K562 (cell line): ENCODE measurements at regions of chr2 and their contacts with region 1.

Region 1: DNA sequence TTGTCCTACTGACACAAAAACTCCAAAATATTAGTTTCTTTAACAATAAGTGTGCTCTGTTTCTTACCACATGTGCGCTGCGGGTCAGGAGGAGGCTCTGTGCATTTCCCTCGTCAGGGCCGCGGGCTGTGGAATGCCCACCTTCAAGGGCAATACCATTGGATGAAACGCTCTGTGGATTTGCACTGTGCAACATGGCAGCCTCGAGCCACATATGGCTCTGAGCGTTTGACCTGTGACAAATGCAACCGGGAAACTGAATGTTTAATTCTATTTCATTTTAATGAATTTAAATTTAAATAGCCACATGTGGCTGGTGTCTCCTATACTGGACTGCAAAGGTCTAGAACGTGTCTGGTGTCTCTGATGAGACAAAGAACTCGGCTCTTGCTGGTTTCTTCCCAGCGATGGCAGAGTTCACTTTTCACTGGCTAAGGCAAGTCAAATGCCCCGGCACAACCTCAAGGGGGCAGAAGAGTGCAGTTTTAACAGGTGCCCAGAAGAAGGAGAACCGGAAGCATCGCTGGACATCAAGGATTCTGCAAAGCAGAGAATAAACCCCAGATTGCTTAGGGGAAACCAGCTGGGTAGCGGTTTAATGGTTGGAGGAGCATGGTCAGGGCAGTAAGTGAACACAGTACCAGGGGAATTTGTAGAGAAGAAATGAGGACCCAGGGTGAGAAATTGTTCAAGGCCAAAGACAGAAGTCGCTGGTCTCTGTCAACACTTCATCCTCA is 37.0 kb upstream of the TMEM18 start:
- DNase-seq: peak in 3 of 4 experiments; percentile 33 to 50 (median 34)
- ATAC-seq: peak; percentile 81
- H3K4me3 ChIP-seq: no peak overlapping the region
- H3K27ac ChIP-seq: no peak overlapping the region
- H3K4me1 ChIP-seq: no peaks in the 10 kb centered on the region; a peak in 1 of 5 replicates
- H3K27me3 ChIP-seq: peaks cover 0 to 27% of the 10 kb centered on the region in 2 experiments; a peak in 4 of 5 replicates
- CTCF ChIP-seq: peak; percentile 49 to 63 (median 49); a peak in 5 of 6 replicates
- EP300 ChIP-seq: no peak
- POLR2A ChIP-seq: no peak
- RAD21 ChIP-seq: peak; percentile 28 to 50; a peak in 2 of 4 replicates

Region 2: DNA sequence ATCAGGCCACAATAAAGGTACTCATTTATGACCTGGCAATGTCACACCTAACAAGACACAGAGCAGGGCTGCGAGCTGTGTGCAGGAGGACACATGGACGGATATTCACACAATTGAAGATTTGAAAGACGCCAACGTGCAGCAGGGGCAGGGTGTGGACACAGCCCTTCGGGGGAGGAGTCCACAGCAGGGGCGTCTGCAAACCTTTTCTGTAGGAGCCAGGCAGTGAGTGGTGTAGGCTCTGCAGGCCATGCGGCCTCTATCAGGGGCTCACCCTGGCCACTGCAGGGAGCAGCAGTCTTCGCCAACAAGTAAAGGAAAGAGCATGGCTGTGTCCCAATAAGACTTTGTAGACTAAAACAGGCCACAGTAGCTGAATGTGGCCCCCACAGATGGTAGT is 110.8 kb after region 1 on chr2:
- CTCF ChIA-PET with region 1: interaction called, 3 read pairs
- POLR2A ChIA-PET with region 1: no interaction called
- in situ Hi-C with region 1: no loop called
- intact Hi-C with region 1: loop called (anchors 10 kb)
- DNase-seq: no peak
- ATAC-seq: peak; percentile 86
- H3K4me3 ChIP-seq: no peak overlapping the region
- H3K27ac ChIP-seq: no peak overlapping the region
- H3K4me1 ChIP-seq: 0 out of 5 replicates have a peak, but pooled peaks cover 0 to 3% of the 10 kb centered on the region in 2 experiments
- H3K27me3 ChIP-seq: peaks cover 18 to 46% of the 10 kb centered on the region in 2 experiments
- CTCF ChIP-seq: no peak
- EP300 ChIP-seq: no peak
- POLR2A ChIP-seq: no peak
- RAD21 ChIP-seq: no peak

Region 3: DNA sequence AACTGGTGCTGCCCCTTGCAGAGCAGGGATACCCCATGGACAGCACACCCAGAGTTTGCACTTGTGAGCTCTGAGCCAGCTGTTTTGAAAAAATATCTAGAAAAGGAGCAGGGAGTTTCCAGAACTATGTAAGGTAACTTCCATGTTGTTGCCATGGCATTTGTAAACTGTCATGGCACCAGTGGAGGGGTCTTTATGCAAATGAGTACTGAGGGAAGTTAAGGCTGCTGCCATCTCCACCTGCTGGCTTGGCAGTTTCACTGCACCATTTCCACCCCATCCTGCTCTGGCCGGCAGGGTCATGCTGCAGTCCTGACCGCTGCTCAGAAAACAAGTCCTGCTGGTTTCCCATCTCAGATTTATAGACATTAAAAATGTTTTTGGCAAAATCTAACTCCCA is 184.1 kb after region 1 on chr2:
- CTCF ChIA-PET with region 1: no interaction called
- POLR2A ChIA-PET with region 1: no interaction called
- in situ Hi-C with region 1: no loop called
- intact Hi-C with region 1: loop called (anchors 5 kb)
- DNase-seq: peak in 3 of 4 experiments; percentile 26 to 40 (median 26)
- ATAC-seq: peak; percentile 92
- H3K4me3 ChIP-seq: no peak overlapping the region
- H3K27ac ChIP-seq: no peak overlapping the region
- H3K4me1 ChIP-seq: peaks cover 0 to 2% of the 10 kb centered on the region in 2 experiments; a peak in 2 of 5 replicates
- H3K27me3 ChIP-seq: 0 out of 5 replicates have a peak, but pooled peaks cover 0 to under 1% of the 10 kb centered on the region in 2 experiments
- CTCF ChIP-seq: peak; percentile 46 to 61 (median 47); a peak in 5 of 6 replicates
- EP300 ChIP-seq: no peak
- POLR2A ChIP-seq: no peak
- RAD21 ChIP-seq: peak in 1 of 2 experiments; percentile 25; a peak in 2 of 4 replicates